Naive thymus-derived CD4-positive, alpha-beta T cell (primary cell): ENCODE measurements at regions of chr2 and their contacts with region 1.

Region 1: GRCh38 chr2:218710687-218711549 is at the start of gene TTLL4:
- DNase-seq: peak; percentile 98 to 99 (median 99)
- ATAC-seq: peak; percentile 99
- H3K4me3 ChIP-seq: peak within 1 kb of the TSS; percentile 79
- H3K4me3 Mint-ChIP-seq: peak within 1 kb of the TSS; percentile 91 to 99 (median 97)
- H3K27ac ChIP-seq: peak within 1 kb of the TSS; percentile 86
- H3K27ac Mint-ChIP-seq: peak within 1 kb of the TSS; percentile 58 to 96 (median 90)
- H3K4me1 ChIP-seq: peaks cover 8% of the 10 kb centered on the region in 2 donors
- H3K4me1 Mint-ChIP-seq: peaks cover 17 to 31% (median 19%) of the 10 kb centered on the region in 7 donors
- H3K27me3 ChIP-seq: no peaks in the 10 kb centered on the region
- H3K27me3 Mint-ChIP-seq: peaks cover 0 to 7% (median 0%) of the 10 kb centered on the region in 5 donors
- total RNA-seq, gene TTLL4: 18.7 to 35.8 (median 21.2) TPM

Region 2: DNA sequence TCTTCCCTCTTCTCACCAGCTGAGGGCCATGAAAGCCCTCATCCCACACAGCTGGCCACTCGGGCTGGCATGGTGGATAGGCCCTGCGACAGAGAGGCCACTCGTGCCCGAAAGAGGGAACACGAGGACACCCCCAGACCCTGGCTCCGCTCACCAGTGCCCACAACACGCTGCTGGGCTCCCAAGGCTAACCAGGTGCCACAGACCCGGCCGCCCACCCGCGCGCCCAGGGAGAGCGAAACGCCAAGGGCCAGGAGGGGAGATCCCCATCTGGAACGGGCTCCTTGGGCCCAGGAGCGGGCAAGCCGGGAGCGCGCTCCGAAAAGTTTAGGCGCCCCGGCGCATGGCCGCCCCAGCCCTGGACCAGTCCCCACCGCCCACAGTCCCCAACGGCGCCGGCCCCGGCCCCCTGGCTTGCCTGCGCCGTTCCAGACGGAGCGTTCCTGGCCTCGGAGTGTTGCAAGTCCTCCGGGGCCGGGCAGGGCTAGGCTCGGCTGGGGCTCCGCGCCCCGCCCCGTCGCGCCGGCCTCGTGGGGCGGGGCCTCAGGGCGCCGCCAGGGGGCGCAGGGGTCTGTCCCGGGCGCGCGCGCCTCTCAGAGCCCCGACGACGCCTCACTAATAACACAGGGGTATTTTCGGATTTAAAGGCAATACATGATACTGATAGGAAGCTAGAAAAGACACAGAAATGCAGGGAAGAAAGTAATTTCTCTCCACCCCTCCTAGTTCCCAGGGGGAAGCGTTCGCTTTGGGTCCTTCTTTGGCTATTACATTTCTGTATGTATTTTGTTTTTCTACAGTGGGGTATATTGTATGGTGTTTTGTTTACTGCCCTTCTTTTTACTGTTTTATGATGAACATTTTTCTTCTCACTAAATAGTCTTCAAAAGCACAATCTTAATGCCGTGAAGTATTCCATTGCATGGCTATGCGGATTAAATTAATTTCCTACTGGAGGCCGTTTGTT is 418.6 kb before region 1 on chr2 and contains the start of gene TMBIM1:
- CTCF ChIA-PET with region 1: no interaction called
- POLR2A ChIA-PET with region 1: no interaction called
- intact Hi-C with region 1: loop called (anchors 1 to 5 kb)
- DNase-seq: peak; percentile 72 to 90 (median 83)
- ATAC-seq: peak; percentile 96
- H3K4me3 ChIP-seq: peak within 1 kb of the TSS; percentile 53
- H3K4me3 Mint-ChIP-seq: peak within 1 kb of the TSS; percentile 82 to 96 (median 92)
- H3K27ac ChIP-seq: peak within 1 kb of the TSS; percentile 93
- H3K27ac Mint-ChIP-seq: peak within 1 kb of the TSS; percentile 88 to 99 (median 98)
- H3K4me1 ChIP-seq: peaks cover 42 to 47% of the 10 kb centered on the region in 2 donors
- H3K4me1 Mint-ChIP-seq: peaks cover 32 to 61% (median 53%) of the 10 kb centered on the region in 7 donors
- H3K27me3 ChIP-seq: no peaks in the 10 kb centered on the region
- H3K27me3 Mint-ChIP-seq: peaks cover 0 to 2% (median 0%) of the 10 kb centered on the region in 5 donors
- total RNA-seq, gene TMBIM1: 51.7 to 112 (median 83.8) TPM

Region 3: GRCh38 chr2:218642121-218642656 is 68.7 kb before region 1 on chr2:
- CTCF ChIA-PET with region 1: no interaction called
- POLR2A ChIA-PET with region 1: no interaction called
- intact Hi-C with region 1: no loop called
- DNase-seq: no peak
- ATAC-seq: no peak
- H3K4me3 ChIP-seq: no peak overlapping the region
- H3K4me3 Mint-ChIP-seq: no peak overlapping the region
- H3K27ac ChIP-seq: no peak overlapping the region
- H3K27ac Mint-ChIP-seq: no peak overlapping the region
- H3K4me1 ChIP-seq: no peaks in the 10 kb centered on the region
- H3K4me1 Mint-ChIP-seq: no peaks in the 10 kb centered on the region
- H3K27me3 ChIP-seq: no peaks in the 10 kb centered on the region
- H3K27me3 Mint-ChIP-seq: no peaks in the 10 kb centered on the region

Region 4: GRCh38 chr2:218671654-218672566 is 39.0 kb before region 1 on chr2 and contains the starts of genes RNF25 and STK36:
- CTCF ChIA-PET with region 1: interaction called, 5 read pairs
- POLR2A ChIA-PET with region 1: interaction called, 7 read pairs
- intact Hi-C with region 1: loop called (anchors 1 kb)
- DNase-seq: peak; percentile 60 to 86 (median 79)
- ATAC-seq: peak; percentile 96
- H3K4me3 ChIP-seq: peak within 1 kb of the TSS; percentile 81
- H3K4me3 Mint-ChIP-seq: peak within 1 kb of the TSS; percentile 88 to 100 (median 98)
- H3K27ac ChIP-seq: peak within 1 kb of the TSS; percentile 84
- H3K27ac Mint-ChIP-seq: peak within 1 kb of the TSS; percentile 90 to 98 (median 96)
- H3K4me1 ChIP-seq: peaks cover 9 to 15% of the 10 kb centered on the region in 2 donors
- H3K4me1 Mint-ChIP-seq: peaks cover 14 to 29% (median 24%) of the 10 kb centered on the region in 7 donors
- H3K27me3 ChIP-seq: no peaks in the 10 kb centered on the region
- H3K27me3 Mint-ChIP-seq: no peaks in the 10 kb centered on the region
- total RNA-seq, gene RNF25: 12.6 to 33.4 (median 28.3) TPM
- total RNA-seq, gene STK36: 18.9 to 28.1 (median 19.7) TPM

Region 5: GRCh38 chr2:218839888-218840287 is 129.0 kb after region 1 on chr2:
- CTCF ChIA-PET with region 1: no interaction called
- POLR2A ChIA-PET with region 1: no interaction called
- intact Hi-C with region 1: no loop called
- DNase-seq: no peak
- ATAC-seq: no peak
- H3K4me3 ChIP-seq: no peak overlapping the region
- H3K4me3 Mint-ChIP-seq: no peak overlapping the region
- H3K27ac ChIP-seq: no peak overlapping the region
- H3K27ac Mint-ChIP-seq: no peak overlapping the region
- H3K4me1 ChIP-seq: no peaks in the 10 kb centered on the region
- H3K4me1 Mint-ChIP-seq: peaks cover 0 to 1% (median 0%) of the 10 kb centered on the region in 7 donors
- H3K27me3 ChIP-seq: no peaks in the 10 kb centered on the region
- H3K27me3 Mint-ChIP-seq: peaks cover 47 to 71% (median 55%) of the 10 kb centered on the region in 5 donors

Region 6: DNA sequence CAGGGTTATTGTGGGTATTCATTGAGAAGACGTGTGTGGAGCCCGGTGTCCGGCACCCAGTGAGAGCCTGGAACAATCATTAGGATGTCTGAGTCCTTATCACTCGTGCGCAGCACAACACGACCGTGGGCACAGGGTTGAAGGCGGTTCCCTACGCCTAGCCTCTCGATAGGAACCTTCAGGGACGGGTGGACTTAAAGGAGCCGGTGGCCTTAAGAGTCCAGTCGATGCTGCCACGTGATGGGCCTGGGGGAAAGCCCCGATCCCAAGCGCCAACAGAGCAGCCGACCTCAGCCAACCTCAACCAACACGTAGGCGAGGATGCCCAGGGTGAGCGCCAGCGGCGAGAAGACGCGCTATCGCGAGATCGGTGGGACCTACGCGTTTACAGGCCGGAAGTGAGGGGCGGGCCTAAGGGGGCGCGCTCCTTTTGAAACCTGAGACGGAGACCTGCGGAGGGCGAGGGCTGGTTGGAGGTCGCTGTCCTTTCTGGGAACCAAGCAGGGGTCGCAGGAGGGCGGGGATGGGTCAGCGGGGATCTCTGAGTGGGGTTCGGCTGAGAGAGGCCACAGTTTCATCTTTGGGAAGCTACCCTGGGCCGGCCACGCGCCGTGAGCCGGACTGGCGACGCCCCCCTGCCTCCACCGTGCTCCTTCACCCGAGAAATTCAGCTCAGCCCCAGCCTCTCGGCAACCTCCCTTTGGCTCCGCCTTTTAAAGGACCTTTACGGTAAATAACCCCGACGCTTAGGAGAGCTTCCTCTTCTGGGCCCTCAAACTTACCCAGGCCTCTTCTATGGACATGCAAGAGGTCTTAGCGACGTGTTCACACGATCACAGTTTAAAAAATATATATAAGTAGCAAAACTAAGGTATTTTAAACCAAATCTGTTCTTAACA is 198.1 kb after region 1 on chr2:
- CTCF ChIA-PET with region 1: no interaction called
- POLR2A ChIA-PET with region 1: no interaction called
- intact Hi-C with region 1: loop called in 1 of 2 experiments (anchors 1 kb)
- DNase-seq: peak; percentile 78 to 89 (median 86)
- ATAC-seq: peak; percentile 98
- H3K4me3 ChIP-seq: peak overlapping the region; percentile 65
- H3K4me3 Mint-ChIP-seq: peak overlapping the region; percentile 82 to 94 (median 86)
- H3K27ac ChIP-seq: peak overlapping the region; percentile 53
- H3K27ac Mint-ChIP-seq: peak overlapping the region in 8 of 9 donors; percentile 10 to 88 (median 80)
- H3K4me1 ChIP-seq: peaks cover 10 to 12% of the 10 kb centered on the region in 2 donors
- H3K4me1 Mint-ChIP-seq: peaks cover 0 to 12% (median 6%) of the 10 kb centered on the region in 7 donors
- H3K27me3 ChIP-seq: no peaks in the 10 kb centered on the region
- H3K27me3 Mint-ChIP-seq: peaks cover 14 to 38% (median 16%) of the 10 kb centered on the region in 5 donors

Region 7: DNA sequence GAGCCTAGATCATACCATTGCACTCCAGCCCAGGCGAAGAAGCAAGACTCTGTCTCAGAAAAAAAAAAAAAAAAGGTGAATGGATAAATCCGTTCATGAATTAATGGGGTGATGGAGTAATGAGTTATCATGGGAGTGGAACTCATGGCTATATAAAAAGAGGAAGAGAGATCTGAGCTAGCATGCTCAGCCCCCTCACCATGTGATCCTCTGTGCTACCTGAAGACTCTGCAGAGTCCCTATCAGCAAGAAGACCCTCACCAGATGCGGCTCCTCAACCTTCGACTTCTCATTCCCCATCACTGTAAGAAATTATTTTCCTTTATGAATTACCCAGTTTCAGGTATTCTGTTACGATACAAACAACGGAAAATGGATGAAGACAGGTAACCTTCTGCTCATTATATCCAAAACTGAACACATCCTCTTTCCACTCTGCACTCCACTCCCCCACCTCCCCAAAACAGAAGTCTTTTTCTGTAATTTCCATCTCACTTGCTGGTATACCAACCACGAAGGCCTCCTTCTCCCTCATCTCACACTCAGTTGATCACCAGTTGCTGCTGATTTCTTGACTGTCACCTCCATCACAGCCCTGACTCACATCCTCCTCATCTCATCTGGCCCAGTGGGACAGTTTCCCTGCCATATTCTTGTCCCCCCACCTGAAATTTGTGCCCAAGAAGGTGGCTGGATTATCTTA is 476.0 kb after region 1 on chr2:
- CTCF ChIA-PET with region 1: no interaction called
- POLR2A ChIA-PET with region 1: no interaction called
- intact Hi-C with region 1: no loop called
- DNase-seq: peak in 1 of 9 donors; percentile 19
- ATAC-seq: no peak
- H3K4me3 ChIP-seq: no peak overlapping the region
- H3K4me3 Mint-ChIP-seq: no peak overlapping the region
- H3K27ac ChIP-seq: no peak overlapping the region
- H3K27ac Mint-ChIP-seq: peak overlapping the region in 6 of 9 donors; percentile 5 to 46 (median 24)
- H3K4me1 ChIP-seq: peaks cover 3 to 9% of the 10 kb centered on the region in 2 donors
- H3K4me1 Mint-ChIP-seq: peaks cover 9 to 23% (median 19%) of the 10 kb centered on the region in 7 donors
- H3K27me3 ChIP-seq: no peaks in the 10 kb centered on the region
- H3K27me3 Mint-ChIP-seq: no peaks in the 10 kb centered on the region

Region 8: GRCh38 chr2:219206442-219207253 is 495.7 kb after region 1 on chr2 and contains the start of gene ZFAND2B:
- CTCF ChIA-PET with region 1: no interaction called
- POLR2A ChIA-PET with region 1: no interaction called
- intact Hi-C with region 1: loop called in 1 of 2 experiments (anchors 1 kb)
- DNase-seq: peak; percentile 92 to 98 (median 96)
- ATAC-seq: peak; percentile 96
- H3K4me3 ChIP-seq: peak within 1 kb of the TSS; percentile 98
- H3K4me3 Mint-ChIP-seq: peak within 1 kb of the TSS; percentile 77 to 98 (median 94)
- H3K27ac ChIP-seq: peak within 1 kb of the TSS; percentile 92
- H3K27ac Mint-ChIP-seq: peak within 1 kb of the TSS; percentile 96 to 99 (median 97)
- H3K4me1 ChIP-seq: peaks cover 20 to 28% of the 10 kb centered on the region in 2 donors
- H3K4me1 Mint-ChIP-seq: peaks cover 15 to 48% (median 43%) of the 10 kb centered on the region in 7 donors
- H3K27me3 ChIP-seq: no peaks in the 10 kb centered on the region
- H3K27me3 Mint-ChIP-seq: no peaks in the 10 kb centered on the region
- total RNA-seq, gene ZFAND2B: 50.1 to 79.5 (median 71.3) TPM

Region 9: GRCh38 chr2:219597552-219598307 is 886.8 kb after region 1 on chr2 and contains the start of gene STK11IP:
- CTCF ChIA-PET with region 1: no interaction called
- POLR2A ChIA-PET with region 1: no interaction called
- intact Hi-C with region 1: loop called in 1 of 2 experiments (anchors 2 kb)
- DNase-seq: peak; percentile 76 to 91 (median 87)
- ATAC-seq: peak; percentile 91
- H3K4me3 ChIP-seq: peak within 1 kb of the TSS; percentile 86
- H3K4me3 Mint-ChIP-seq: peak within 1 kb of the TSS; percentile 89 to 99 (median 96)
- H3K27ac ChIP-seq: peak within 1 kb of the TSS; percentile 80
- H3K27ac Mint-ChIP-seq: peak within 1 kb of the TSS; percentile 93 to 98 (median 94)
- H3K4me1 ChIP-seq: peaks cover 5 to 15% of the 10 kb centered on the region in 2 donors
- H3K4me1 Mint-ChIP-seq: peaks cover 14 to 30% (median 21%) of the 10 kb centered on the region in 7 donors
- H3K27me3 ChIP-seq: no peaks in the 10 kb centered on the region
- H3K27me3 Mint-ChIP-seq: peaks cover 3 to 10% (median 6%) of the 10 kb centered on the region in 5 donors
- total RNA-seq, gene STK11IP: 33.6 to 46.4 (median 42.6) TPM